ENCODE measurements at regions of chr16 and their contacts with region 1.

Region 1: DNA sequence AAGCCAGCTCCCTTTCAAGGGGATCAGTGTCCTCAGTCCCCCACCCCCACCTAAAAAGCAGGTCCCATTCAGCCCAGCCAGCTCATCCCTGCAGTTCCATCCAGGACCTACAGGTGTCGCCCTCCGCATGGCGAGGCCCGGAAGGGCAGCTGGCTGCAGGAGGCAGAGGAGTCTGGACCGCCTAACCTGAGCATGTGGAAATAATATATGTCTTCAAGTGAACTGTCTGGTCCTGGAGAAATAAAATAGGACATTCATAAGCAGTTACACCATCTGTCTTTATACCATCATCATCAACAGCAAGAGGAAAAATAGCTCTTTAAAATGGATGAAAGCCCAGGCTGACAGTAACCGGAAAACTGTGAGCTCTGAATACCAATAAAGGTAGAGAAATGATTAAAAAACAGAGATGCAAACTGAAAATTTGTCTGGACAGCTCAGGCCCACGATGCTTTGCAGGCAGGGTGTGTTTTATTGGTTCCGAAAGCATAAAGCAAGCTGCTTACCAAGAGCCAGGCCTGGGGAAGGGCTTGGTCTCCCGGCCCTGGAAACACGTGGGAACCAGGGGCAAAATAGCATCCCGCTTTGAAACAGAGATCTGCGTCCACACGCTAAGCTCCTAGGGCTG is 215.2 kb downstream of the ZFHX3 start:
- DNase-seq: peak; percentile 72
- ATAC-seq: peak; percentile 81
- H3K4me3 ChIP-seq: no peak overlapping the region
- H3K4me3 Mint-ChIP-seq: no peak overlapping the region
- H3K27ac ChIP-seq: no peak overlapping the region
- H3K27ac Mint-ChIP-seq: no peak overlapping the region
- H3K4me1 ChIP-seq: peaks cover 0 to 2% of the 10 kb centered on the region in 2 donors
- H3K4me1 Mint-ChIP-seq: peaks cover 2% of the 10 kb centered on the region
- H3K27me3 ChIP-seq: no peaks in the 10 kb centered on the region
- H3K27me3 Mint-ChIP-seq: no peaks in the 10 kb centered on the region
- CTCF ChIP-seq: peak; percentile 99

Region 2: GRCh38 chr16:72501739-72502593 is 330.8 kb before region 1 on chr16:
- CTCF ChIA-PET with region 1: interaction called, 16 read pairs
- POLR2A ChIA-PET with region 1: no interaction called
- intact Hi-C with region 1: no loop called
- DNase-seq: peak; percentile 60
- ATAC-seq: peak; percentile 36
- H3K4me3 ChIP-seq: no peak overlapping the region
- H3K4me3 Mint-ChIP-seq: no peak overlapping the region
- H3K27ac ChIP-seq: no peak overlapping the region
- H3K27ac Mint-ChIP-seq: no peak overlapping the region
- H3K4me1 ChIP-seq: no peaks in the 10 kb centered on the region
- H3K4me1 Mint-ChIP-seq: peaks cover 2% of the 10 kb centered on the region
- H3K27me3 ChIP-seq: no peaks in the 10 kb centered on the region
- H3K27me3 Mint-ChIP-seq: no peaks in the 10 kb centered on the region
- CTCF ChIP-seq: peak; percentile 78

Region 3: DNA sequence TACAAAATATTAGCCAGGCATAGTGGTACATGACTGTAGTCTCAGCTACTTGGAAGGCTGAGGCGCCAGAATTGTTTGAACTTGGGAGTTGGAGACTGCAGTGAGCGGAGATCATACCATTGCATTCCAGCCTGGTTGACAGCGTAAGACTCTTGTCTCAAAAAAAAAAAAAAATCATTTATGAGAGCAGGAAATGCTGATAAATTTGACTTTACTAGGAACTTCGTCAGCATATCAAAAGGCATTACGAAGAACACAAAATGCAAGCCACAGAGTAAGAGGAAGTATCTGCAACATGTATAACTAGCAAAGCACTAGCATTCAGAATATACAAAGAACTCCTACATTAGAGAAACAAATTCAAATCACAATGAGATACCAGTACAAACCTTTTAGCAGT is 64.1 kb before region 1 on chr16:
- CTCF ChIA-PET with region 1: no interaction called
- POLR2A ChIA-PET with region 1: no interaction called
- intact Hi-C with region 1: no loop called
- DNase-seq: no peak
- ATAC-seq: no peak
- H3K4me3 ChIP-seq: no peak overlapping the region
- H3K4me3 Mint-ChIP-seq: no peak overlapping the region
- H3K27ac ChIP-seq: no peak overlapping the region
- H3K27ac Mint-ChIP-seq: no peak overlapping the region
- H3K4me1 ChIP-seq: no peaks in the 10 kb centered on the region
- H3K4me1 Mint-ChIP-seq: peaks cover 3% of the 10 kb centered on the region
- H3K27me3 ChIP-seq: no peaks in the 10 kb centered on the region
- H3K27me3 Mint-ChIP-seq: no peaks in the 10 kb centered on the region
- CTCF ChIP-seq: no peak

Region 4: GRCh38 chr16:72818236-72818845 is 14.4 kb before region 1 on chr16:
- CTCF ChIA-PET with region 1: interaction called, 16 read pairs
- POLR2A ChIA-PET with region 1: no interaction called
- intact Hi-C with region 1: no loop called
- DNase-seq: no peak
- ATAC-seq: no peak
- H3K4me3 ChIP-seq: no peak overlapping the region
- H3K4me3 Mint-ChIP-seq: no peak overlapping the region
- H3K27ac ChIP-seq: no peak overlapping the region
- H3K27ac Mint-ChIP-seq: no peak overlapping the region
- H3K4me1 ChIP-seq: no peaks in the 10 kb centered on the region
- H3K4me1 Mint-ChIP-seq: no peaks in the 10 kb centered on the region
- H3K27me3 ChIP-seq: no peaks in the 10 kb centered on the region
- H3K27me3 Mint-ChIP-seq: no peaks in the 10 kb centered on the region
- CTCF ChIP-seq: no peak

Region 5: DNA sequence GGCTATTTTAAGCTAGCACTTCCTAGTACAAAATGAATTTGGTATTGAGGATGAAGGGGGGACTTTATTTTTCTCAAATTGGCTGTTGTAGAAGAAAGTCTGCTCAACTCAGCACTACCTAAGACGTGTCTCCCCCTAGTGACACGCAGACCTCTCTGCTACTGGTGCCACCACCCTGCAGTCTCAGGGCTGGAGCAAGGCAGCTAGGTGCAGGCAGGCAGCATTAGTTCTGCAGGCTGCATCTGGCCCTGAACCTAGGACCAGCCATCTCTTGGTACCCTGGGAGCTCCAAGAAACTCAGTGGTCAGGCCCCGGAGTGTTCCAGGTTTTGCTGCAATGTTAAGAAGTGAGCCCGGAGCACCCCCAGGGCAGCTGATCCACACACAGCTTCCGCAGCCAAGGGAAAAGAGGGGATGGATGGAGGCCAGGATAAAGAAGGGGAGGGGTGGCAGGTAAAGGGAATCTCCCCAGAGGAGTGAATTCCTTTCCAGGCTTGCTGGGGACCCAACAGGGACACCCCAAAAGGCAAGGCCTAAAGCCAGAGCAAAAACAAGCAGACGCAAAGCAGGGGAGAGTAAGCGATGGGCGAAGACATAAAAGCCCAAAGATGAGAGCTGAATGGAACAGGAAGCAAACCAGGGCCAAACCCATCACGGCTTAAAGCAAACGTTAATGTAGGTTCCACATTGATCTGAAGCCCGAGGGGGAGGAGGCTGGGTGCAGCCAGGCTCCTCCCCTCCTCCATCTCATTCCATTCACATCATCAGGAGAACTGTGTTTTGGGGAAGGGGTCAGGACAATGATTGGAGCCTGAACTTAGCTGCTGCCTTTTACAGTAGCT is 14.7 kb after region 1 on chr16:
- CTCF ChIA-PET with region 1: interaction called, 17 read pairs
- POLR2A ChIA-PET with region 1: no interaction called
- intact Hi-C with region 1: no loop called
- DNase-seq: no peak
- ATAC-seq: no peak
- H3K4me3 ChIP-seq: no peak overlapping the region
- H3K4me3 Mint-ChIP-seq: no peak overlapping the region
- H3K27ac ChIP-seq: no peak overlapping the region
- H3K27ac Mint-ChIP-seq: no peak overlapping the region
- H3K4me1 ChIP-seq: peaks cover 18 to 20% of the 10 kb centered on the region in 2 donors
- H3K4me1 Mint-ChIP-seq: peaks cover 24% of the 10 kb centered on the region
- H3K27me3 ChIP-seq: peaks cover 0 to 23% (median 0%) of the 10 kb centered on the region in 4 experiments
- H3K27me3 Mint-ChIP-seq: peaks cover 31% of the 10 kb centered on the region
- CTCF ChIP-seq: no peak

Region 6: DNA sequence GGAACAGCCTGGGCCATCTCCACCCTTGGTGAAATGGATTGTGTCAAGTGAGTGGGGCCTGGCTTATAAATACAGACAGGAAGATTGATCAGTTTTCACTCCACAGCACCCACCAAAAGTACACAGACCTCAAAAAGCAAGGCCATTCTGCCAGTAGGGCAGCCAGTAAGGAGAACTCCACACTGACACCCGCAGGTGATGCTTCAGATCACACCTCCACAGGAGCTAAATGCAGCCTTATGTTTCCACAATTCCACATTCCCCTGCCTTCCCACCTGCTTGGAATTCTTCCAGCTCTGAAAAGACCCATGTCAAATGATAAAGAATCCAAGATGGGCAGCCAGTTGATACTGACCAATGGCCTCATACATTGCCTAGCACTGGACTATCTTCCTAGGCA is 24.1 kb after region 1 on chr16:
- CTCF ChIA-PET with region 1: interaction called, 11 read pairs
- POLR2A ChIA-PET with region 1: no interaction called
- intact Hi-C with region 1: no loop called
- DNase-seq: no peak
- ATAC-seq: no peak
- H3K4me3 ChIP-seq: no peak overlapping the region
- H3K4me3 Mint-ChIP-seq: no peak overlapping the region
- H3K27ac ChIP-seq: no peak overlapping the region
- H3K27ac Mint-ChIP-seq: no peak overlapping the region
- H3K4me1 ChIP-seq: peaks cover 10% of the 10 kb centered on the region in 2 donors
- H3K4me1 Mint-ChIP-seq: peaks cover 14% of the 10 kb centered on the region
- H3K27me3 ChIP-seq: no peaks in the 10 kb centered on the region
- H3K27me3 Mint-ChIP-seq: no peaks in the 10 kb centered on the region
- CTCF ChIP-seq: no peak

Region 7: GRCh38 chr16:73047518-73048291 is 215.0 kb after region 1 on chr16 and contains the start of gene ZFHX3:
- CTCF ChIA-PET with region 1: interaction called, 5 read pairs
- POLR2A ChIA-PET with region 1: no interaction called
- intact Hi-C with region 1: loop called (anchors 5 kb)
- DNase-seq: peak; percentile 87
- ATAC-seq: peak; percentile 86
- H3K4me3 ChIP-seq: peak within 1 kb of the TSS; percentile 34 to 71 (median 62)
- H3K4me3 Mint-ChIP-seq: peak within 1 kb of the TSS; percentile 80
- H3K27ac ChIP-seq: peak within 1 kb of the TSS in 1 of 2 donors; percentile 59
- H3K27ac Mint-ChIP-seq: peak within 1 kb of the TSS; percentile 64
- H3K4me1 ChIP-seq: peaks cover 9 to 16% of the 10 kb centered on the region in 2 donors
- H3K4me1 Mint-ChIP-seq: peaks cover 21% of the 10 kb centered on the region
- H3K27me3 ChIP-seq: peaks cover 0 to 6% (median under 1%) of the 10 kb centered on the region in 4 experiments
- H3K27me3 Mint-ChIP-seq: peaks cover 8% of the 10 kb centered on the region
- CTCF ChIP-seq: peak; percentile 4
- total RNA-seq, gene ZFHX3: 6.4 and 6.6 TPM in 2 replicates

Region 8: DNA sequence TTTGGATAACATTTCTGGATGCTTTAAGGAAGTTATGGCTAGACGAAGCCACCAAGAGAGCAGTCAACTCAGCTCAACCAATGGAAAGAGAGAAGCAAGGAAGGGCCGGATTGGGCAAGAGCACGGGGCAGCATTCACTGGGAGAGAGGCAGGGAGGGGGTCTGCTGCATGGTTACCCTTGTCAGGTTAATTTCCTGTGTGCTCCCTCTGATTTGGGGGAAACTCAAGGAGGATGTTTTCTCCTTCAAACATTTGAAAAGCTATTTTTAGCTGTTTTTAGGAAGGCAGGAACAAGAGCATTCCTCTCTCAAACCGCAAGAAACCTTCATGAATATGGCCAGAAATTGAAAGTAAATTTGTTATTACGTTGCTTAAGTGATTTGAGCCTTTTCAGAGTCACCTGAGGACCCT is 333.7 kb after region 1 on chr16:
- CTCF ChIA-PET with region 1: no interaction called
- POLR2A ChIA-PET with region 1: no interaction called
- intact Hi-C with region 1: no loop called
- DNase-seq: no peak
- ATAC-seq: no peak
- H3K4me3 ChIP-seq: no peak overlapping the region
- H3K4me3 Mint-ChIP-seq: no peak overlapping the region
- H3K27ac ChIP-seq: no peak overlapping the region
- H3K27ac Mint-ChIP-seq: no peak overlapping the region
- H3K4me1 ChIP-seq: peaks cover 2 to 5% of the 10 kb centered on the region in 2 donors
- H3K4me1 Mint-ChIP-seq: peaks cover 11% of the 10 kb centered on the region
- H3K27me3 ChIP-seq: no peaks in the 10 kb centered on the region
- H3K27me3 Mint-ChIP-seq: peaks cover 11% of the 10 kb centered on the region
- CTCF ChIP-seq: no peak

Region 9: GRCh38 chr16:73196670-73197069 is 363.9 kb after region 1 on chr16:
- CTCF ChIA-PET with region 1: interaction called, 21 read pairs
- POLR2A ChIA-PET with region 1: no interaction called
- intact Hi-C with region 1: no loop called
- DNase-seq: peak; percentile 45
- ATAC-seq: no peak
- H3K4me3 ChIP-seq: no peak overlapping the region
- H3K4me3 Mint-ChIP-seq: no peak overlapping the region
- H3K27ac ChIP-seq: no peak overlapping the region
- H3K27ac Mint-ChIP-seq: no peak overlapping the region
- H3K4me1 ChIP-seq: no peaks in the 10 kb centered on the region
- H3K4me1 Mint-ChIP-seq: no peaks in the 10 kb centered on the region
- H3K27me3 ChIP-seq: peaks cover 0 to 2% (median 0%) of the 10 kb centered on the region in 4 experiments
- H3K27me3 Mint-ChIP-seq: peaks cover under 1% of the 10 kb centered on the region
- CTCF ChIP-seq: peak; percentile 59